ENCODE measurements at regions of chr1 and their contacts with region 1.

Region 1: DNA sequence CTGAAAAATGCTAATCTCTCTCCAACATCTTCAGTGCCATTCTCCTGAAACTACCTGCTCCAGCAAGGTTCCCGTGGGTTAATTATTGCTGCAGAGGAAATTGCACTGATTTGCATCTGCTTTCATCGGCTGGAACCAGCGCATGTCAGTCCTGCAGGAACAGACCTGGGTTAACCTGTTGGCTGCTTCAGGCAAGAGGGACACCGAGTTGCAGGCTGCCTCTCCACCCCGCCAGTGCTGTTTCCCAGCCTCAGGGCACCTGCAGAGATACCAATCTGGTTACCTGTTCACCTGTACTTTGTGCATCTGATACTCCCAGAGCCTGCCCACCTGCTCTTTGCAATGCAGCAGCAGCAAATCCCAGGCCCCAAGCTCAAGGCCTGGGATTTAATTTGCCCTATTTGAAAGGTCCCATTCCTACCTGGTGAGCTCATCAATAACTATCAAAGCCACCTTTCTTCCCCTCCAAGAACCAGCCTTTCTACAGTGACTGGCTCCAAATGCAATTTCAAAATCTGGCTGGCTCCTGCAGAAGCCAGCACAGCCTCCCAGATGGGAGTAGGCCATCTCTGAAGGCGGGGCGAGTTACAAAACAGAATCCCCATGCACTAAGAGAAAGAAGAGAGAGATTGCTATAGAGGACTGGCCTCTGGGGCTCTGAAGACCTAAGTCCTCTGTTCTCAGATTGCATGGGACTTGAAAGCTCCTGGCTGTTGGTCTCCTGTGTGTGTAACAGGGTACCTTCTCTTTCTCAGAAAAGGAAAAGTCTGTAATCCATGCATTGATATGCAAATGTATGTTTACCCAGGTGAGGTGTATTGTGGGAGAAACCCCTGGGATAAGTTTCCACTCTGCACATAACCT is 67.8 kb downstream of the TOMM20 start:
- DNase-seq: no peak
- ATAC-seq: no peak
- H3K4me3 ChIP-seq: no peak overlapping the region
- H3K4me3 Mint-ChIP-seq: no peak overlapping the region
- H3K27ac ChIP-seq: no peak overlapping the region
- H3K27ac Mint-ChIP-seq: peak overlapping the region in 1 of 9 donors; percentile 21
- H3K4me1 ChIP-seq: peaks cover 0 to 8% of the 10 kb centered on the region in 2 donors
- H3K4me1 Mint-ChIP-seq: peaks cover 8 to 52% (median 14%) of the 10 kb centered on the region in 7 donors
- H3K27me3 ChIP-seq: no peaks in the 10 kb centered on the region
- H3K27me3 Mint-ChIP-seq: no peaks in the 10 kb centered on the region

Region 2: DNA sequence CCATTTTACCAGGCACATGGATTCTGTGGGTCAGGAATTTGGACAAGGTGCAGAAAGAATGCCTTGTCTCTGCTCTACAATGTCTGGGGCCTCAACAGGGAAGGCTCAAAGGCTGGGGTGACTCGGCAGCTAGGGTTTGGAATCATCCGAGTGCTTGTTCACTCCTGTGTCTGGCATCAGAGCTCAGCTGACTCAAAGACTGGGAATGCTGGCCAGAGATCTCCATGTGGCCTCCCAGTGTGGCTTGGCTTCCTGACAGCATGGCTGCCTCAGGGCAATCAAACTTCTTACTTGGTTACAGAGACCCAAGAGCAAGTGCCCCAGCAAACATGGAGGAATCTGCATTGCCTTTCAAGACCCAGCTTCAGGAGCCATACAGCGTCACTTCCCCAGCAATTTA is 42.7 kb before region 1 on chr1:
- CTCF ChIA-PET with region 1: no interaction called
- POLR2A ChIA-PET with region 1: no interaction called
- intact Hi-C with region 1: loop called in 1 of 2 experiments (anchors 5 kb)
- DNase-seq: no peak
- ATAC-seq: no peak
- H3K4me3 ChIP-seq: no peak overlapping the region
- H3K4me3 Mint-ChIP-seq: no peak overlapping the region
- H3K27ac ChIP-seq: no peak overlapping the region
- H3K27ac Mint-ChIP-seq: peak overlapping the region in 3 of 9 donors; percentile 12 to 69 (median 62)
- H3K4me1 ChIP-seq: peaks cover 4 to 6% of the 10 kb centered on the region in 2 donors
- H3K4me1 Mint-ChIP-seq: peaks cover 17 to 79% (median 38%) of the 10 kb centered on the region in 7 donors
- H3K27me3 ChIP-seq: no peaks in the 10 kb centered on the region
- H3K27me3 Mint-ChIP-seq: no peaks in the 10 kb centered on the region

Region 3: DNA sequence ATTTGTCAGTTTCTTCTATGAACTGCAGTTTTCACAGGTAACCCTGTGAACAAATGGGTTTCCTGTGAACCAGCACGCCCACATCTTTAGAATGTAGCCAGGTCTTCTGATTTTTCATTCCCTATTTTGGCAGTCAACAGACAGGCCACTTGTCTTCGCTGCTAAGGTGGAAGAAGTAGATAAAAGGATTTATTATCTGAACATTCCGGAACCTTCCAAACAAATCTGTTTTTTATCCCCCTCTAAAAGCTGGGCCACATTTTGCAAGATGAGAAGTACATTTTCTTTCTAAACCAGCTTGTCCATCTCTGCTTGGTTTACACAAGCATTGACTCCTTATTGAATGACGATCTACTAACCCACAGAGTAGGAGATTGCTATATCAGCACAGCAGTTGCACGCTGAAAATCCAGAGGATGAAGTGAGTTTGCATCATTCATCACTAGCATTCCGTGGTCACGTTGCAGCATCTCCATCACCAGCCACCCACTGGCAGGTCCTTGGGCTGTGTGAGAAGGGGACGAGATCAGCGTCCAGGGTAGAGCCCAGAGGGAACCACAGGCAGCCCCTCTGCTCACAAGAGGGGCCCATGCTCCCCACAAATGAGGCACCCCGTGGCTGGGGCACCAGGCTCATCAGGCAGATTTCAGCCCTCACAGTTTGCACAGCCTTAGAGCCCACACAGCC is 15.7 kb before region 1 on chr1:
- CTCF ChIA-PET with region 1: no interaction called
- POLR2A ChIA-PET with region 1: no interaction called
- intact Hi-C with region 1: no loop called
- DNase-seq: no peak
- ATAC-seq: no peak
- H3K4me3 ChIP-seq: no peak overlapping the region
- H3K4me3 Mint-ChIP-seq: no peak overlapping the region
- H3K27ac ChIP-seq: no peak overlapping the region
- H3K27ac Mint-ChIP-seq: peak overlapping the region in 3 of 9 donors; percentile 20 to 49 (median 40)
- H3K4me1 ChIP-seq: no peaks in the 10 kb centered on the region
- H3K4me1 Mint-ChIP-seq: peaks cover 0 to 54% (median 10%) of the 10 kb centered on the region in 7 donors
- H3K27me3 ChIP-seq: no peaks in the 10 kb centered on the region
- H3K27me3 Mint-ChIP-seq: no peaks in the 10 kb centered on the region

Measured in naive thymus-derived CD4-positive, alpha-beta T cell (primary cell).